ENCODE measurements at regions of chr2 and their contacts with region 1.

Region 1: DNA sequence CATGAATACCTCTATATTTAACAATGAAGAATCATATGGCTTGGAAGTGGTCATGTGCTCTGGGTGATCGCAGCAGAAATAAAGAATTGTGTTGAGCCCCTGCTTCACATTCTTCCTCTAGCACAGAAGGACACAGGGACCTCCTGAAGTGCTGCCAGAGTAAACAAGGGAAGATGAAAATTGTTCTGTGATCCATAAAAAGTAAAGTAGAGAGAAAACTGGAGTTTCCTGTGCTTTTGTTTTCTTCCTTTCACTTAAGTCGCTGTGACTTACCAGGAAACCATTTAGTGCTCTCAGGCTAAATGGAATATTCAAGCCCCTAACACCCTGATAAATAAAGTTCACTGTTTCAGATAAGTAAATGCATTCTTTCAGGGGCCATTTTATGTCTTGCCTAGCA is 1173.6 kb upstream of the CHAC2 start:
- DNase-seq: no peak
- H3K4me3 ChIP-seq: no peak overlapping the region
- H3K27ac ChIP-seq: no peak overlapping the region
- H3K4me1 ChIP-seq: no peaks in the 10 kb centered on the region
- H3K27me3 ChIP-seq: no peaks in the 10 kb centered on the region
- CTCF ChIP-seq: no peak
- EP300 ChIP-seq: no peak
- POLR2A ChIP-seq: no peak

Region 2: DNA sequence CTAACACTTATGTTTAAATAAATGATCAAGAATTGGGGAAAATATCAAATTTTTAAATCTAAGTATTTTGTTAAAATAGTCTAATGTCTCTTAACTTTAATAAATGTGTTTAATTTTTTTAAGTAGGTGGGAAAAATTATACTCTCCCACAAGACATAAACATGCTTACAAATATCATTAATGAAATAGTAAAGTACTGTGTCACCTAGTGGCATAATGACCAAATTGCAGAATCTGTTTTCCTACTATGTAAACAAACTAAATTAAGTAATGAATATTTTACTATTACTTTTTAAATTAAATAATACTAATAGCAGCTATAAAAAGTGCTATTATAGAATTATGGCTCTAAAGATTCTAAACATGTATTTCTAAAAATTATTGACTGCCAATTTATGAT is 1121.5 kb after region 1 on chr2:
- in situ Hi-C with region 1: loop called in 1 of 4 experiments (anchors 25 kb)
- intact Hi-C with region 1: no loop called
- DNase-seq: no peak
- H3K4me3 ChIP-seq: no peak overlapping the region
- H3K27ac ChIP-seq: no peak overlapping the region
- H3K4me1 ChIP-seq: no peaks in the 10 kb centered on the region
- H3K27me3 ChIP-seq: no peaks in the 10 kb centered on the region
- CTCF ChIP-seq: peak in 4 of 5 experiments; percentile 30 to 40 (median 36)
- EP300 ChIP-seq: no peak
- POLR2A ChIP-seq: no peak

Measured in transverse colon (tissue), 4 donors.